ENCODE measurements at regions of chr14 and their contacts with region 1.

Region 1: GRCh38 chr14:22505697-22506377 is 83.2 kb downstream of the DAD1 start:
- DNase-seq: peak in 3 of 9 experiments; percentile 48 to 65 (median 48)
- ATAC-seq: peak; percentile 38
- H3K4me3 ChIP-seq: peak overlapping the region; percentile 49 to 53
- H3K4me3 Mint-ChIP-seq: peak overlapping the region; percentile 81
- H3K27ac ChIP-seq: peak overlapping the region; percentile 72 to 82
- H3K27ac Mint-ChIP-seq: peak overlapping the region; percentile 99
- H3K4me1 ChIP-seq: peaks cover 51% of the 10 kb centered on the region
- H3K4me1 Mint-ChIP-seq: peaks cover 78% of the 10 kb centered on the region
- H3K27me3 ChIP-seq: no peaks in the 10 kb centered on the region
- H3K27me3 Mint-ChIP-seq: no peaks in the 10 kb centered on the region
- CTCF ChIP-seq: no peak

Region 2: DNA sequence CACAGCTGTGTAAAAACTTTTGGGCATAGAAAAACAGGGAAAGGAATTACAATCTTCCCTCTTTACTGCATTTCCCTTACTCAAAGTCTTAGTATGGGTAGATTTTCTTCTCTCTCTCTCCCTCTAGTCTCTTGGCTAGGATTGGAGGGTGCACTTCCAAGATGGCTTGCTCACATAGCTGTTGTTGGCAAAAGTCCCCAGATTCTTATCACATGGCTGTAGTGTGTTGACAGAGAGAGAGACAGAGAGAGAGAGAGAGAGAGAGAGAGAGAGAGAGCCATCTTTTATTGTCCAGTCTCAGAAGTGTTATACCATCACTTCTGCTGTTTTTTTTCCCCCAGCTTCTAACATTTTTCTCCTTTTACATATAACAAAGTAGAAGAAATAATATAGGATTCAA is 858.5 kb before region 1 on chr14:
- CTCF ChIA-PET with region 1: interaction called, 8 read pairs
- POLR2A ChIA-PET with region 1: interaction called, 23 read pairs
- intact Hi-C with region 1: no loop called
- DNase-seq: no peak
- ATAC-seq: no peak
- H3K4me3 ChIP-seq: no peak overlapping the region
- H3K4me3 Mint-ChIP-seq: no peak overlapping the region
- H3K27ac ChIP-seq: no peak overlapping the region
- H3K27ac Mint-ChIP-seq: no peak overlapping the region
- H3K4me1 ChIP-seq: no peaks in the 10 kb centered on the region
- H3K4me1 Mint-ChIP-seq: no peaks in the 10 kb centered on the region
- H3K27me3 ChIP-seq: peaks cover 0 to 4% of the 10 kb centered on the region in 2 experiments
- H3K27me3 Mint-ChIP-seq: peaks cover 27% of the 10 kb centered on the region
- CTCF ChIP-seq: no peak

Region 3: DNA sequence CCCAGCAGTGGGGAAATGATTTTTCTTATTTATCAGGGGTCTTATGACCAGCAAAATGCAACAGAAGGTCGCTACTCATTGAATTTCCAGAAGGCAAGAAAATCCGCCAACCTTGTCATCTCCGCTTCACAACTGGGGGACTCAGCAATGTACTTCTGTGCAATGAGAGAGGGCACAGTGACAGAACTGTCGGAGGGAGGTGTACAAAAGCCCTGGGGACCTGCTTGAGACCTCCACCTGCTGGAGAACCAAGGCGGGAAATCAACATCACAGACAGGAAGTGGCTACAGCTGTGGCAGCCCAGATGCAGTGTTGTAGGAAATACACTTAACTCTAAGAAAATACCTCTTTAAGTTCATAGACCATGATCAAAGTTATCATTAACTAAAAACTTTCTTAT is 581.4 kb before region 1 on chr14:
- CTCF ChIA-PET with region 1: no interaction called
- POLR2A ChIA-PET with region 1: no interaction called
- intact Hi-C with region 1: loop called in 1 of 2 experiments (anchors 5 kb)
- DNase-seq: peak; percentile 31 to 88 (median 69)
- ATAC-seq: peak; percentile 83
- H3K4me3 ChIP-seq: peak overlapping the region; percentile 16 to 33
- H3K4me3 Mint-ChIP-seq: peak overlapping the region; percentile 74
- H3K27ac ChIP-seq: peak overlapping the region; percentile 22 to 48
- H3K27ac Mint-ChIP-seq: peak overlapping the region; percentile 91
- H3K4me1 ChIP-seq: peaks cover 46% of the 10 kb centered on the region
- H3K4me1 Mint-ChIP-seq: peaks cover 58% of the 10 kb centered on the region
- H3K27me3 ChIP-seq: no peaks in the 10 kb centered on the region
- H3K27me3 Mint-ChIP-seq: no peaks in the 10 kb centered on the region
- CTCF ChIP-seq: peak; percentile 38

Region 4: DNA sequence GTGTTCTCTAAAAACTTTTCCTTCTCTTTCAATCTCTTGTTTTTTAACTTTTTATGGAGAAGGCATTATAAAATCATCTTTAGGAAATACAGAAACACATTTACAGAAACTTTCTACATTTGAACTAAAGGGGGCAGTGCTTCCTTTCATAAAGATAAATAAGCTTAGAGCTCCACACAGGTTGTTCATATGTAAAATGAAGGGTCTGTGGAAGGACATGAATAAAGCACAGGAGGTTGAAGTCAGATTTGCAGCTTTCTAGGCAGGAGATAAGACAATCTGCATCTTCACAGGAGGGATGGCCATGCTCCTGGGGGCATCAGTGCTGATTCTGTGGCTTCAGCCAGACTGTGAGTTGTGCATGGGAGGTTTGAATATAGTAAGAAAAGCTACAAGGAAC is 342.8 kb before region 1 on chr14:
- CTCF ChIA-PET with region 1: no interaction called
- POLR2A ChIA-PET with region 1: no interaction called
- intact Hi-C with region 1: loop called in 1 of 2 experiments (anchors 1 kb)
- DNase-seq: peak in 2 of 9 experiments; percentile 26 to 49
- ATAC-seq: peak; percentile 56
- H3K4me3 ChIP-seq: no peak overlapping the region
- H3K4me3 Mint-ChIP-seq: peak overlapping the region; percentile 84
- H3K27ac ChIP-seq: no peak overlapping the region
- H3K27ac Mint-ChIP-seq: peak overlapping the region; percentile 92
- H3K4me1 ChIP-seq: no peaks in the 10 kb centered on the region
- H3K4me1 Mint-ChIP-seq: peaks cover 16% of the 10 kb centered on the region
- H3K27me3 ChIP-seq: no peaks in the 10 kb centered on the region
- H3K27me3 Mint-ChIP-seq: no peaks in the 10 kb centered on the region
- CTCF ChIP-seq: no peak

Region 5: GRCh38 chr14:22519877-22520685 is 14.2 kb after region 1 on chr14:
- CTCF ChIA-PET with region 1: interaction called, 21 read pairs
- POLR2A ChIA-PET with region 1: interaction called, 274 read pairs
- intact Hi-C with region 1: loop called in 1 of 2 experiments (anchors 1 kb)
- DNase-seq: peak in 2 of 9 experiments; percentile 37 to 57
- ATAC-seq: peak; percentile 21
- H3K4me3 ChIP-seq: peak overlapping the region; percentile 47 to 61
- H3K4me3 Mint-ChIP-seq: peak overlapping the region; percentile 86
- H3K27ac ChIP-seq: peak overlapping the region; percentile 58 to 86
- H3K27ac Mint-ChIP-seq: peak overlapping the region; percentile 99
- H3K4me1 ChIP-seq: peaks cover 94% of the 10 kb centered on the region
- H3K4me1 Mint-ChIP-seq: peaks cover 93% of the 10 kb centered on the region
- H3K27me3 ChIP-seq: no peaks in the 10 kb centered on the region
- H3K27me3 Mint-ChIP-seq: no peaks in the 10 kb centered on the region
- CTCF ChIP-seq: no peak

Region 6: DNA sequence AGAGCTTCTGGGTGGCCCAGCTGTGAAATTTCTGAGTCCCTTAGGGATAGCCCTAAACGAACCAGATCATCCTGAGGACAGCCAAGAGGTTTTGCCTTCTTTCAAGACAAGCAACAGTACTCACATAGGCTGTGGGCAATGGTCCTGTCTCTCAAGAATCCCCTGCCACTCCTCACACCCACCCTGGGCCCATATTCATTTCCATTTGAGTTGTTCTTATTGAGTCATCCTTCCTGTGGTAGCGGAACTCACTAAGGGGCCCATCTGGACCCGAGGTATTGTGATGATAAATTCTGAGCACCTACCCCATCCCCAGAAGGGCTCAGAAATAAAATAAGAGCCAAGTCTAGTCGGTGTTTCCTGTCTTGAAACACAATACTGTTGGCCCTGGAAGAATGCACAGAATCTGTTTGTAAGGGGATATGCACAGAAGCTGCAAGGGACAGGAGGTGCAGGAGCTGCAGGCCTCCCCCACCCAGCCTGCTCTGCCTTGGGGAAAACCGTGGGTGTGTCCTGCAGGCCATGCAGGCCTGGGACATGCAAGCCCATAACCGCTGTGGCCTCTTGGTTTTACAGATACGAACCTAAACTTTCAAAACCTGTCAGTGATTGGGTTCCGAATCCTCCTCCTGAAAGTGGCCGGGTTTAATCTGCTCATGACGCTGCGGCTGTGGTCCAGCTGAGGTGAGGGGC is 44.3 kb after region 1 on chr14:
- CTCF ChIA-PET with region 1: interaction called, 20 read pairs
- POLR2A ChIA-PET with region 1: interaction called, 472 read pairs
- intact Hi-C with region 1: loop called in 1 of 2 experiments (anchors 5 kb)
- DNase-seq: peak in 7 of 9 experiments; percentile 53 to 86 (median 78)
- ATAC-seq: peak; percentile 63
- H3K4me3 ChIP-seq: peak overlapping the region; percentile 2 to 14
- H3K4me3 Mint-ChIP-seq: peak overlapping the region; percentile 79
- H3K27ac ChIP-seq: peak overlapping the region; percentile 55 to 97
- H3K27ac Mint-ChIP-seq: peak overlapping the region; percentile 93
- H3K4me1 ChIP-seq: peaks cover 96% of the 10 kb centered on the region
- H3K4me1 Mint-ChIP-seq: peaks cover 94% of the 10 kb centered on the region
- H3K27me3 ChIP-seq: no peaks in the 10 kb centered on the region
- H3K27me3 Mint-ChIP-seq: no peaks in the 10 kb centered on the region
- CTCF ChIP-seq: no peak

Measured in CD8-positive, alpha-beta T cell (primary cell).